Heart left ventricle (tissue), 16 donors: ENCODE measurements at regions of chr18 and their contacts with region 1.

Region 1: DNA sequence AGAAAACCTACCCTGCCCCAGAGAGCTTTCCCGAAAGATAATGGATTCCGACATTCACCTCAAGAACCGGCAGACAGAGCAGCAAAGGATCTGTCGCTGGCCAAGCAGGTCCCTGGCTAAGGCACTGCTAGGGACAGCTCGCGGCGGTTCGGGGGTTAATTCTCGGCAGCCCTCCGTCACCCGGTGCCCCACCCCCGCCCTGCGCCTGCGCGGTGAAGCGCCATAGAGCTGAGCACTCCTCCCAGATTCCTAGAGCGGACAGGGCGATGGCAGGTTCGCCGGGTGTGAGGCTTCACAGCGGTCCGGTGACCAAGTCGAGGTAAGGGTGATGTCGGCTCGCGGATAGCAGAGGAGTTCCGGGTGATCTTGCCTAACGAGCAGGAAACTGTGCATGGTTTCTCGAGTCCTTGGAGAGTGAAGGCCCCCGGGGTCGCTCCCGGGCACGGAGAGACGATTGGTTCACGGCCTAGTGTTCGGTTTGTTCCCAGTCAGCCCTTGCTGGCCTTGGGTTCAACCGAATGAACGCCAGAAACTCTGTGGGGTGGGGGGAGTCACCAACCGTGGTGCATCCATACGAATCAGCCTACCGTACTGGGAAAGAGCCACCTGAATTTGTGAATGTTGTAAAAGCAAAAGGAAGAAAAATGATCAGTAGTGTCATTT is at the start of gene ZSCAN30:
- DNase-seq: peak; percentile 95 to 98 (median 96)
- ATAC-seq: peak; percentile 99 to 100 (median 100)
- H3K4me3 ChIP-seq: peak within 1 kb of the TSS; percentile 61 to 97 (median 83)
- H3K27ac ChIP-seq: peak within 1 kb of the TSS; percentile 36 to 89 (median 82)
- H3K4me1 ChIP-seq: peaks cover 0 to 39% (median 20%) of the 10 kb centered on the region in 12 donors
- H3K27me3 ChIP-seq: no peaks in the 10 kb centered on the region
- CTCF ChIP-seq: no peak
- POLR2A ChIP-seq: peak in 1 of 2 donors; percentile 71
- total RNA-seq, gene ZSCAN30: 9.4 to 18.1 (median 13.8) TPM

Region 2: DNA sequence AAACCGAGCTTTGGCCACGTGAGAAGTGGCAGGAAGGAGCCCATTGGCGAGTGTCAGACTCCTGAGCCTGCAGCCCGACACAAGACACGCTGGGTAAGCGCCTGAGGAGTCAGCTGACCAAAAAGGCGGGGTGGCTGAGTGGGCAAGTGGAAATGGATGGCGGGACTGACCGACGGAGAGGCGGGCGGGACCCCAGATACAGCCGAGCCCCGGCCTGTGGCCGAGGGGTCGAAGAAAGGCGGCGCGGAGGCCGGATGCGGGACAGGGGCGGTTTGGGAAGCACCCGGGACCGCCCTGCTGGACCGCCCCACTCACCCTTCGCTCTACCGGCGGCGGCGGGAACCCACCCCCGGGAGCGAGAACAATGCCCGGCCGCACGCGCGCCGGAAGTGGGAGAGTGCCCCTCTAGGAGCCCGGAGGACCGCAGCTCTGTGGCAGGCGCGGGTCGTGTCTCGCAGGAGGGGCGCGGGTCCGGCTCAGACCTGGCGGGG is 23.0 kb before region 1 on chr18:
- intact Hi-C with region 1: loop called in 2 of 10 experiments (anchors 2 kb)
- DNase-seq: peak; percentile 84 to 89 (median 86)
- ATAC-seq: peak; percentile 79 to 98 (median 96)
- H3K4me3 ChIP-seq: peak overlapping the region; percentile 57 to 92 (median 67)
- H3K27ac ChIP-seq: peak overlapping the region; percentile 48 to 93 (median 88)
- H3K4me1 ChIP-seq: peaks cover 0 to 10% (median 5%) of the 10 kb centered on the region in 12 donors
- H3K27me3 ChIP-seq: no peaks in the 10 kb centered on the region
- CTCF ChIP-seq: peak in 5 of 12 donors; percentile 8 to 25 (median 15)
- POLR2A ChIP-seq: peak in 1 of 2 donors; percentile 58

Region 3: GRCh38 chr18:35343936-35344735 is 53.9 kb after region 1 on chr18 and contains the start of gene ZNF24:
- intact Hi-C with region 1: loop called in 6 of 10 experiments (anchors 2 to 10 kb)
- DNase-seq: peak; percentile 96 to 98 (median 97)
- ATAC-seq: peak; percentile 97 to 99 (median 98)
- H3K4me3 ChIP-seq: peak within 1 kb of the TSS; percentile 80 to 100 (median 98)
- H3K27ac ChIP-seq: peak within 1 kb of the TSS; percentile 97 to 100 (median 100)
- H3K4me1 ChIP-seq: peaks cover 5 to 56% (median 39%) of the 10 kb centered on the region in 12 donors
- H3K27me3 ChIP-seq: no peaks in the 10 kb centered on the region
- CTCF ChIP-seq: no peak
- POLR2A ChIP-seq: peak in 1 of 2 donors; percentile 57
- total RNA-seq, gene ZNF24: 32.3 to 53.3 (median 46.1) TPM

Region 4: DNA sequence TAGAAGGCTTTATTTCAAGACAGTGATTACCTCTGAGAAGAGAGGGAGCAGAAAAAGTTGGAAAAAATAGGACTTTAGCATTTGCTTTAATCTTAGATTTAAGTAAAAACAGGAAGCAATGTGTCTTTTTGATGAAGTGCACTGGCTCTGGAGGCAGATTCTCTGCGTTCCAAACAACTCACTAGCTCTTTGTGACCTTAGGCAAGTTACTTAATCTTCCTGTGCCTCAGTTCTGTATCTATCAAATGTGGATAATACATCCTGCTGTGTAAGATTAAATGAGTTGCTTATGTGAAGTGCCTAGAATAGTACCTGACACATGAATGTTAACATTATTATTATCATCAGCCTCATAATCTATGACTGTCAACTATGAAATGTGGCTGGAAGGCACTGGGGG is 734.8 kb after region 1 on chr18:
- intact Hi-C with region 1: no loop called
- DNase-seq: no peak
- ATAC-seq: no peak
- H3K4me3 ChIP-seq: no peak overlapping the region
- H3K27ac ChIP-seq: no peak overlapping the region
- H3K4me1 ChIP-seq: peaks cover 0 to 8% (median 0%) of the 10 kb centered on the region in 12 donors
- H3K27me3 ChIP-seq: no peaks in the 10 kb centered on the region
- CTCF ChIP-seq: no peak
- POLR2A ChIP-seq: no peak